Activated CD8-positive, alpha-beta T cell treated with anti-CD3 and anti-CD28 coated beads for 36 hours (primary cell): ENCODE measurements at regions of chr14 and their contacts with region 1.

Region 1: DNA sequence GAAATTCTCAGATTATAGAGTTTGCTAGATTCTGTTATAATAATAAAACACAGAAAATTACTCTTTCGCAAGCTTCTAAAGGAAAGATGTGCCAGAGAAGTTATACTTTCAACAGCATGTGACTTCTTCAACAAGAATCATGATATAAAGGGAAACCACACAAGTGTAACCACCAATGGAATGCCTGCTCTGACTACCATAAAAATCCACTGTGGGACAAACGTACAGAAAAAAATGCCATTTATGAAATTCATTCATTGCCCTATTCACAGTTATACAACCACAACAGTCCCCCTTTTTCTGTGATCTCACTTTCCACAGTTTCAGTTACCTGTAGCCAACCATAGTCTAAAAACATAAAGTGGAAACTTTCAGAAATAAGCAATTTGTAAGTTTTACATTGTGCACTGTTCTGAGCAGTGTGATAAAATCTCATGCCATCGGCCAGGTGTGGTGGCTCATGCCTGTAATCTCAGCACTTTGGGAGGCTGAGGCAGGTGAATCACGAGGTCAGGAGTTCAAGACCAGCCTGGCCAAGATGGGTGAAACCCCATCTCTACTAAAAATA is 3.2 kb downstream of the CATSPERB start:
- DNase-seq: no peak
- ATAC-seq: peak; percentile 55
- H3K4me3 Mint-ChIP-seq: no peak overlapping the region
- H3K27ac Mint-ChIP-seq: peak overlapping the region; percentile 13
- H3K4me1 Mint-ChIP-seq: peaks cover 16% of the 10 kb centered on the region
- H3K27me3 Mint-ChIP-seq: no peaks in the 10 kb centered on the region
- CTCF ChIP-seq: no peak

Region 2: GRCh38 chr14:91614187-91614586 is 114.5 kb before region 1 on chr14:
- CTCF ChIA-PET with region 1: no interaction called
- POLR2A ChIA-PET with region 1: no interaction called
- intact Hi-C with region 1: no loop called
- DNase-seq: no peak
- ATAC-seq: no peak
- H3K4me3 Mint-ChIP-seq: no peak overlapping the region
- H3K27ac Mint-ChIP-seq: no peak overlapping the region
- H3K4me1 Mint-ChIP-seq: no peaks in the 10 kb centered on the region
- H3K27me3 Mint-ChIP-seq: no peaks in the 10 kb centered on the region
- CTCF ChIP-seq: no peak

Region 3: DNA sequence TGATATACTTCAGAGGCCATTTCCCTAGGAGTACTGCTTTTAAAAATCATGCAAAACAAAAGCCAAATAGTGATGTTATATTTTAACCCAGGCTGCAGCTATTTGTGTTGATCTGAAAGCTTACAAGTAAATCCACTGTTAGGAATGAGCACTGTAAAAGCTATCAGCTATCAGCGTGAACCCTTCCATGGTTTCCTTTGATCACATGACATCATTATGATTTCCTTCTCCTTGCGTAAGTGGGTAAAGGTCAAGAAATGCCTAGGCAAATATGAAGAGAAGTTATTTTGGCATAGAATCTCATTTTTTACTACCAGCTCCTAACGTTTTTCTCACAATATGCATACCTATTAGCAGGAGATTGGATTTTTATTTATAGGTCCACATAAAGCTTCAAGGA is 51.8 kb after region 1 on chr14:
- CTCF ChIA-PET with region 1: no interaction called
- POLR2A ChIA-PET with region 1: no interaction called
- intact Hi-C with region 1: no loop called
- DNase-seq: no peak
- ATAC-seq: no peak
- H3K4me3 Mint-ChIP-seq: no peak overlapping the region
- H3K27ac Mint-ChIP-seq: no peak overlapping the region
- H3K4me1 Mint-ChIP-seq: peaks cover 3% of the 10 kb centered on the region
- H3K27me3 Mint-ChIP-seq: no peaks in the 10 kb centered on the region
- CTCF ChIP-seq: no peak

Region 4: DNA sequence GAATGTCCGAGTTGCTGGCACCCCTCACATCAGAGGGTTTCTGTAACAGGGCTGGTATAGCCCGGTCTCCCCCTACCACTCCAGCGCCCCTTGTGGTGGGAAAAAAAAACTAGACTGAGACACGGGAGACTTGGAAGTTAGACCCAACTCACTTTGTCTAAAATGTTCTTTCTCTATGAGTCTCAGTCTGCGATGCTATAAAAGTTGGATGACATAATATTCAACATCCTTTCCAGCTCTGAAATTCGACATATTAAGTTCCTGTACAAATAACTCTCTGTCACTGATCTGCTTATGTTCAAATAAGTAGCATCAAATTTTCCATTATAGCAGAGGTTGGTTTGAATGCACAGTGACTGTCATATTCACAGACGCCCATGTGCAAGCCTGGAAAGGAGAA is 164.3 kb after region 1 on chr14:
- CTCF ChIA-PET with region 1: no interaction called
- POLR2A ChIA-PET with region 1: no interaction called
- intact Hi-C with region 1: loop called (anchors 5 kb)
- DNase-seq: peak; percentile 24
- ATAC-seq: peak; percentile 52
- H3K4me3 Mint-ChIP-seq: no peak overlapping the region
- H3K27ac Mint-ChIP-seq: peak overlapping the region; percentile 76
- H3K4me1 Mint-ChIP-seq: peaks cover 52% of the 10 kb centered on the region
- H3K27me3 Mint-ChIP-seq: no peaks in the 10 kb centered on the region
- CTCF ChIP-seq: peak; percentile 66

Region 5: DNA sequence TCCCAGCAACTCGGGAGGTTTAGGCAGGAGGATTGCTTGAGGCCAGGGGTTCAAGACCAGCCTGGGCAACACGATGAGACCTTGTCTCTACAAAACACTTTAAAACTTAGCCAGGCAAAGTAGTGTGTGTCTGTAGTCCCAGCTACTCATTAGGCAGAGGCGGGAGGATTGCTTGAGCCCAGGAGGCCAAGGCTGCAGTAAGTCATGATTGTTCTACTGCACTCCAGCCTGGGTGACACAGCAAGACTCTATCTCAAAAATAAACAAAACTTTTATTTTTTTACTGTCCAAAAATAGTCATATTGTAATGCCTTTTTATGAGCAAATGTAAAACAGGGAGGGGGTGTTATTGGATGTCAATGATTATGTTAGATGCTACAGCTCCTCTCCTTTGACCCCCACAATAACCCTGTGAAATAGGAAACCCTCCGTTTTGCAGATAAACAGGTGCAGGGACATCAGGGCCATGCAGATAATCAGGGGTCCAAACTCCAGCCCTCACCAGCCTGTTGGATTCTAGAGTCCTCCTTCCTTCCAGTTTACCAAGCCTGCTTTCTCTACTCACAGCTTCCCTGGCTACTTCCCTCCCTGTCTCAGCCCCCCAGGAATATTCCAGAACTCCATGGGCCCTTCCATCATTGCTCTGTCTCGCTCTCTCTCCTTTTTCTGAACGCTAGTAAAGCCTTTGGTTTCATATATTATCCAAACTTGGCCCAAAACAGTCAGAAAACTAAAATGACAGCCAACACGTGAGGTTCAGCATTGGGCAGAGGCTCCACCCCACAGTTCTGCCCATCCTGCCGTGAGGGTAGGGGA is 224.7 kb after region 1 on chr14:
- CTCF ChIA-PET with region 1: no interaction called
- POLR2A ChIA-PET with region 1: no interaction called
- intact Hi-C with region 1: no loop called
- DNase-seq: no peak
- ATAC-seq: no peak
- H3K4me3 Mint-ChIP-seq: no peak overlapping the region
- H3K27ac Mint-ChIP-seq: no peak overlapping the region
- H3K4me1 Mint-ChIP-seq: no peaks in the 10 kb centered on the region
- H3K27me3 Mint-ChIP-seq: peaks cover 2% of the 10 kb centered on the region
- CTCF ChIP-seq: no peak